Activated T-helper 1 cell treated with anti-CD3 and anti-CD28 coated beads, Interleukin-12 subunit alpha, Interleukin-12 subunit beta, Interleukin-2, Interleukin-4 antibody, amounts not matched to agents 30 ng/mL and 10 ng/mL and 1 ng/mL, durations not matched to agents 14 hours and 24 hours and 36 hours (primary cell): ENCODE measurements at regions of chr10 and their contacts with region 1.

Region 1: GRCh38 chr10:102917962-102918816 is at the start of gene CNNM2:
- DNase-seq: peak; percentile 99
- H3K4me3 Mint-ChIP-seq: peak within 1 kb of the TSS; percentile 92
- H3K27ac Mint-ChIP-seq: peak within 1 kb of the TSS; percentile 91
- H3K4me1 Mint-ChIP-seq: peaks cover 60% of the 10 kb centered on the region
- H3K27me3 Mint-ChIP-seq: peaks cover 7% of the 10 kb centered on the region
- total RNA-seq, gene CNNM2: 5.5 and 6.6 TPM in 2 replicates

Region 2: DNA sequence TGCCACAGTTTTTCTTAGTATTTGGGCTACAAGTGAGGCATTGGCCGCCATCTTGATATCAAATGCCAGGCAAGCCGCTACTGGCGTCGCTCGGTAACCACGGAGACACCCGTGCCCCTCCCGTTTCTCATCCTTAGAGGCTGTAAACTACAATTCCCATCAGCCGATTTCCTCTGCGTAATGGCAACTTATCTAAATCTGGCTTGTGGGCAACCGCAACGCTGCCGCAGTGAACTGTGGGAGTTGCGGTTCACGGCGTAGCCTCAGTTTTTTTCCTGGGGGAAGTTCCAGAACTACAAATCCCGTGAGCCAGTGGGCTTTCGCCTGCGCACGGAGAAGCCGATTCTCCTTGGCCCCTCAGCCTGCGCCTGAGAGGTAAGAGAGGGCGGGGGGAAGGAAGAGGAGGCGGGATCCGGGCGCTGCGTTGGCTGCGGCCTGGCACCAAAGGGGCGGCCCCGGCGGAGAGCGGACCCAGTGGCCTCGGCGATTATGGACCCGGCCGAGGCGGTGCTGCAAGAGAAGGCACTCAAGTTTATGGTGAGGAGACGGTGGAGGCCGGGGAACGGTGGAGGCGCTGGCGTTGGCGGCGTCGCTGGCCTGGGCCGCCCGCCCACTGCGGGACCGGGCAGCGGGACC is 1564.4 kb before region 1 on chr10 and contains the start of gene BTRC:
- intact Hi-C with region 1: loop called (anchors 5 kb)
- DNase-seq: peak; percentile 96
- H3K4me3 Mint-ChIP-seq: peak within 1 kb of the TSS; percentile 96
- H3K27ac Mint-ChIP-seq: peak within 1 kb of the TSS; percentile 98
- H3K4me1 Mint-ChIP-seq: peaks cover 32% of the 10 kb centered on the region
- H3K27me3 Mint-ChIP-seq: peaks cover 17% of the 10 kb centered on the region
- total RNA-seq, gene BTRC: 19.7 and 22.2 TPM in 2 replicates

Region 3: GRCh38 chr10:102629661-102630614 is 288.3 kb before region 1 on chr10:
- intact Hi-C with region 1: no loop called
- DNase-seq: no peak
- H3K4me3 Mint-ChIP-seq: no peak overlapping the region
- H3K27ac Mint-ChIP-seq: no peak overlapping the region
- H3K4me1 Mint-ChIP-seq: peaks cover 33% of the 10 kb centered on the region
- H3K27me3 Mint-ChIP-seq: no peaks in the 10 kb centered on the region

Region 4: DNA sequence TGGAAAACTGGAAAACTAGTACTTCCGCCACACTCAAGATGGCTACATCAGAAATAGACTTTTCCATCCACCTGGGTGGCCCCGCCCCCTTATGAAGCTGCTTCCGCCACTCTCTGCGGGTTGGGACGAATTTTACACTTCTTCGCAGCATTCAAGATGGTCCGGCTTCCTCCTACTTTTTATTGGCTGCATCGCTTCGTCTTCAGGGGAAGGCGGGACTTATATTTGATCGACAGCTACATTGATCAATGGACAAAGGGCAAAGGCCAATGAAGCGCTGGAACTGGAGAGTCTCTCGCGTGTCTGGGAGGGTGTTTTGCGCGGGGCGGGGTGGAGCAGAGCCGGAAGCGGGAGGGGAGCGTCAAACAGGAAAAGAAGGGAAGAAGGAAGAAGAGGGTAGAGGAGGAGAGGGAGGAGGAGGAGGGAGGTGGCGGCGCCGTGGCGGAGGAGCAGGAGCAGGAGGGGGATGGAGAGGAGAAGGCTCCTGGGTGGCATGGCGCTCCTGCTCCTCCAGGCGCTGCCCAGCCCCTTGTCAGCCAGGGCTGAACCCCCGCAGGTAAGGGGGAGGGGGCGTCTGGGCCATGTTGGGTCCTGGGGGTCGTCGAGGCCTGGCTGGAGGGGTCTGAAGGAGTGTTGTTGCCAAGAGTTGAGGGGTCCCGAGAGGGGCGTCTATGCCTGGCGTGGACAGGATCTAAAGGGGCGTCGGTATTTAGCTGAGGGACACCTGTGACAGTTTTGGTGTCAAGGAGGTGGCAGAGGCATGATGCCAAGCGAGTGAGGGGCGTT is 174.4 kb before region 1 on chr10 and contains the start of gene WBP1L:
- intact Hi-C with region 1: loop called (anchors 1 kb)
- DNase-seq: peak; percentile 94
- H3K4me3 Mint-ChIP-seq: peak within 1 kb of the TSS; percentile 92
- H3K27ac Mint-ChIP-seq: peak within 1 kb of the TSS; percentile 93
- H3K4me1 Mint-ChIP-seq: peaks cover 46% of the 10 kb centered on the region
- H3K27me3 Mint-ChIP-seq: peaks cover 1% of the 10 kb centered on the region
- total RNA-seq, gene WBP1L: 19.4 and 20.0 TPM in 2 replicates

Region 5: DNA sequence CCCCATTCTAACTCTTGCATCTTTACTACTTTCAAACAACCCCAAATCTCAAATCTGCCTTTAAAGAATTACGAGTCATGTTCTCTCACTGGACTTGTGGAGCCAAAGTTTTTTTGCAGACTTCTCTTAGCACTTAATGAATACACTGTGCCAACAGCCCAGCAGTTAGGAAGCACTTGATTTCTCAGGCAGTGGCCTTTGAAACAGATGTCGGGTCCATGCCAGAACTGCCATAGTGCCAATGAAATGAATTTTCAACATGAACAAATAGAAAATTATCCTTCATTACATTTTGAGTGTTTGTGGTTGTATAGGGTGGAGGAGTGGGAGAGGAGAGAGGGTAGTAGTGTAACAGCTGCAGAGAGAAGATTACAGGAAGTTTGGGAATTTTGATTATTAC is 58.3 kb before region 1 on chr10:
- intact Hi-C with region 1: no loop called
- DNase-seq: no peak
- H3K4me3 Mint-ChIP-seq: no peak overlapping the region
- H3K27ac Mint-ChIP-seq: no peak overlapping the region
- H3K4me1 Mint-ChIP-seq: peaks cover 19% of the 10 kb centered on the region
- H3K27me3 Mint-ChIP-seq: no peaks in the 10 kb centered on the region

Region 6: GRCh38 chr10:103053659-103054581 is 135.7 kb after region 1 on chr10:
- intact Hi-C with region 1: loop called (anchors 1 kb)
- DNase-seq: peak; percentile 69
- H3K4me3 Mint-ChIP-seq: peak overlapping the region; percentile 83
- H3K27ac Mint-ChIP-seq: peak overlapping the region; percentile 92
- H3K4me1 Mint-ChIP-seq: peaks cover 25% of the 10 kb centered on the region
- H3K27me3 Mint-ChIP-seq: no peaks in the 10 kb centered on the region

Region 7: DNA sequence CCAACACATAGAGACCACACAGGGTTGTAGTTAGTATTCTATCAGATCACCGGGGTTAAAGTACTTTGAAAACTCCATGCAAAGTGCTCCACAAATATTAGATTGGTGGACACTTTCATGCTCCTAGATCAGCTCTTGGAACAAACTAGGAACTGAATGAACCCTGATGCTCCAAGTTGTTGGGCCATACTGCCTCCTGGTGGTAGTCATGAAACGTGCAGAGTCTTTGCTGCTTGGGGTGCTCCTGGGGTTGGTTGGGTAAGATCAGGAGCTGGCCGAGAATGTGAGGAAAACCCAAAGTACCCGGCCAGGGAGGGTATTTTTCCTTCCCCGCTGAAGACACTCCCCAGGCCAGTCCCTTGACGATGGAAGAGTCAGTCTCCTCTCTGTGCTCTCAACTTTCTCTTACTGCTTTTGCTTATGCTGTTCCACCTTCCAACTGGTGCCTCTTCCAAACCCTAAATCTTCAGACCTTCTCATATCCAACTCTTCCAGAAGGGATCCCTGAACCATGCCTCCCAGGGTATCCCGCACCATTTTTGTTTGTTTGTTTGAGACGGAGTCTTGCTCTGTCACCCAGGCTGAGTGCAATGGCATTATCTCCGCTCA is 326.6 kb after region 1 on chr10:
- intact Hi-C with region 1: loop called (anchors 1 kb)
- DNase-seq: peak; percentile 50
- H3K4me3 Mint-ChIP-seq: no peak overlapping the region
- H3K27ac Mint-ChIP-seq: no peak overlapping the region
- H3K4me1 Mint-ChIP-seq: peaks cover 31% of the 10 kb centered on the region
- H3K27me3 Mint-ChIP-seq: peaks cover 6% of the 10 kb centered on the region

Region 8: DNA sequence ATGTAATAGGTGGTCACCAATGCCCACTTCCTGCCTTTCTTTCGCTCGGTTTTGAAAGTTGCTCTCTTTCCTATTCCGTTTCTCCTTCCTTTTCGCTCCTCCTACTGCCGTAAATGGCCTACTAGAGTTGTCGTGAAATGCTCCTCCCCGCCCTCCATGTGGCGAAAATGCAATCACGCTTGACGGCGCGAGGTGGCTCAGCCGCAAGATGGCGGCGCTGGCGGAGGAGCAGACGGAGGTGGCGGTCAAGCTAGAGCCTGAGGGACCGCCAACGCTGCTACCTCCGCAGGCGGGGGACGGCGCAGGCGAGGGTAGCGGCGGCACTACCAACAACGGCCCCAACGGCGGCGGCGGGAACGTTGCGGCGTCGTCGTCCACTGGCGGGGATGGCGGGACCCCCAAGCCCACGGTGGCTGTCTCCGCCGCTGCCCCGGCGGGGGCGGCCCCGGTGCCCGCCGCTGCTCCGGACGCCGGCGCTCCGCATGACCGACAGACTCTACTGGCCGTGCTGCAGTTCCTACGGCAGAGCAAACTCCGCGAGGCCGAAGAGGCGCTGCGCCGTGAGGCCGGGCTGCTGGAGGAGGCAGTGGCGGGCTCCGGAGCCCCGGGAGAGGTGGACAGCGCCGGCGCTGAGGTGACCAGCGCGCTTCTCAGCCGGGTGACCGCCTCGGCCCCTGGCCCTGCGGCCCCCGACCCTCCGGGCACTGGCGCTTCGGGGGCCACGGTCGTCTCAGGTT is 449.8 kb after region 1 on chr10 and contains the start of gene TAF5:
- intact Hi-C with region 1: loop called (anchors 1 kb)
- DNase-seq: peak; percentile 89
- H3K4me3 Mint-ChIP-seq: peak within 1 kb of the TSS; percentile 89
- H3K27ac Mint-ChIP-seq: peak within 1 kb of the TSS; percentile 91
- H3K4me1 Mint-ChIP-seq: peaks cover 5% of the 10 kb centered on the region
- H3K27me3 Mint-ChIP-seq: no peaks in the 10 kb centered on the region
- total RNA-seq, gene TAF5: 10.4 and 11.0 TPM in 2 replicates